Psoas muscle (tissue), 8 donors: ENCODE measurements at regions of chr4 and their contacts with region 1.

Region 1: DNA sequence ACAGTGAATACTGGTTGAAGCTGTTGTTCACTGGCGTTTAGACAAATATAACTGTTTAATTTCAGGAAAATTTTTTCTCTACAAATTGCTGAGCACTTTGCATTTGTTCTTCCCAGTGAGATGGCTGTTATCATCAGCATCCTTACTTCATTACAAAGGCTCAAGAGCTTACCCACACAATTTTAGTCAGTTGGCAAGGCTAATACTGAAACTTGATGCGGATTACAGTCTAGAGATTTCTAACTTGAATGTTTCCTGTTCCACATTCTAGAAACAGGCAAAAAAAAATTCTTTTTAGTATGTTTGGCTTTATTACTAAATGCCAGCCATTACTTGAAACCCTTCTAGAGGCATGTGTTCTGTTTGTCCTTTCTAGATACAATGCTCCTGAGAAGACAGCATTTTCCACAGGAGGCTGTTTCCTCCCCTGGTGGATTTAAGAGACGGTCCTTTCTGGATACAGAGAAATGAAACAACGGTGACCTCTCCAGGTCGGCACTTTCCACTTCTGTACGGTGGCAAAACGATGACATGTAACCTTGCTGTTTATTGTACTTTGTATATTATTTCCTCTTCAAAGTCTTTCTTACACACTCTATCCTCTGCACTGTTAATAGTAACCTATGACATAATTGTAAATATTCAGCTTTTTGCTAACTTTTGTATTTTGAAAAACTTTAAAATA is 80.9 kb downstream of the RFC1 start:
- DNase-seq: no peak
- ATAC-seq: no peak
- H3K4me3 ChIP-seq: no peak overlapping the region
- H3K27ac ChIP-seq: no peak overlapping the region
- H3K4me1 ChIP-seq: no peaks in the 10 kb centered on the region
- H3K27me3 ChIP-seq: no peaks in the 10 kb centered on the region
- CTCF ChIP-seq: no peak

Region 2: GRCh38 chr4:39305912-39306677 is 20.8 kb after region 1 on chr4:
- intact Hi-C with region 1: loop called in 1 of 2 experiments (anchors 2 kb)
- DNase-seq: no peak
- ATAC-seq: no peak
- H3K4me3 ChIP-seq: no peak overlapping the region
- H3K27ac ChIP-seq: no peak overlapping the region
- H3K4me1 ChIP-seq: no peaks in the 10 kb centered on the region
- H3K27me3 ChIP-seq: no peaks in the 10 kb centered on the region
- CTCF ChIP-seq: no peak